Activated T-helper 1 cell treated with anti-CD3 and anti-CD28 coated beads, Interleukin-12 subunit alpha, Interleukin-12 subunit beta, Interleukin-2, Interleukin-4 antibody, amounts not matched to agents 30 ng/mL and 10 ng/mL and 1 ng/mL, durations not matched to agents 14 hours and 24 hours and 36 hours (primary cell): ENCODE measurements at regions of chr15 and their contacts with region 1.

Region 1: DNA sequence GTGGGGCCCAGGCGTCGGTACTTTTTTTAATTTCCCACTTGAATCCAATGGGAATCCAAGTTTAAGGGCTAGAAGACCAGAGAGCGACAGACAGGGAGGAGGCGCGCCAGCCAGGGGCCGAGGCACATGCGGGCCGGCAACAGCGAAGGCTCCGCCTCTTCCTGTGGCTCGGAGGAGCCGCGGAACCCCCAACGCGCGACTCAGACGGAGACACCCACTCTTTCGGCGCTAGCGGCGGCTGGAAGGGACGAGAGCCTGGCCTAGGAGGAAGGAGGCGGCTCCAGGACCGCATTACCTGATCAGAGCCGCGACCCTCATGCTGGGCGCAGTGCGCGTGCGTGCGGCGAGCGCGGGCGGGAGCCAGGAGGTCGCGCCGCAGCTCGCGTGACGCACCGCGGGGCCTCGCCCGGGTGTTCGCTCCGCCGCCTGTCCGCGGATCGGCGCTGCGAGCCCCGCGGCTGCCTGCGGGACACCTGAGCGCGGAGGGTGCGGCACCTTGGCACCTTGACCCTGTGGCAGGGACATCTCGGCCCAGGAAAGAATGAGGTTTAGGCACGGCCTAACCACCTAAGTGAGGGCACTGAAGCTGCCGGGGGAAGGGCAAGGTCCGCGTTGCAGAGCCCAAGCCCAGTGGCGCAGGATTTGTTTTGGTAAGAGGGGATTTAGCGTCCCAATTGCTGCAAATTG is at the start of gene DPH6:
- DNase-seq: peak; percentile 73
- H3K4me3 Mint-ChIP-seq: peak within 1 kb of the TSS; percentile 92
- H3K27ac Mint-ChIP-seq: peak within 1 kb of the TSS; percentile 98
- H3K4me1 Mint-ChIP-seq: peaks cover 10% of the 10 kb centered on the region
- H3K27me3 Mint-ChIP-seq: peaks cover 1% of the 10 kb centered on the region
- total RNA-seq, gene DPH6: 10.7 and 13.1 TPM in 2 replicates

Region 2: DNA sequence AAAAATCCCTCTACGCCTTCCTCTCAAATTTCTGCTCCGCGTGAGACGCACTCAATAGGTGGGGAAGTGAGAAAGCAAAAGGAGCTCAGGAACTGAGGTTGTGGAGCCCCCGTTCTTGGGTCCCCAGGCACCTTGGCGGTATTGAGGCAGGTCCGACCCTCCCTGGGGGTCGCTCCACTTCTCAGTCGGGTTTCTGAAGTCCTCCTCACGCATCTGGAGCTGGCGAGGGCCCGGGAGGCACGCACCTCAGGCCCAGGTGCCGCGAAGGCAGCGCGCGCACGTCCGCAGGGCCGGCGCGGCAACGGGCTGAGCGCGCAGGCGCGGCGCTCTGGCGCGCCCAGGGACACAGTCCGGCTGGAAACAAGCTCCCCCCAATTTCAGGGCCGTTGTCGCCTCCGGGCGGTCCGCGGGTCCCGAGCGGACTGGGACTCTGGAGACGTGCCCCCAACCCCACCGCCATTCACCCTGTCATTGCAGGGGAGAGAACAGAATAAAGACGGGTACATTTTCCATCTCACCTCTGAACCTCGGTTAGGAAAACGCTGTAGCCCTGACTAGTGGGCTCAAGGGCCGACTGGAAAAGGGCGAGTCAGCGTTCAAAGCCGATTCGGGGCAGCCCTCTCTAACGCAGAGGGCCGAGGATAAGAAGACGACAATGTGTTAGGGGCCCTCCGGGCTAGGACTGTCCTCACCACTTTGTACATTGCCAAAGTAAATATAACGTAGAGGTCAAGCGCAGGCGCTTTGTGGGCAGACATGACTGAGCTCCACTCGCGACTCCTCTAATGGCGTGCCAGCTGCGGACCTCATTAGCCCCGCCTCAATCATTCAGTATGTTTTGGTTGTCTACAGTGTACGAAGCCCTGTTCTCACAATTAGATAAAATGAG is 557.7 kb before region 1 on chr15 and contains the start of gene ZNF770:
- intact Hi-C with region 1: loop called (anchors 5 kb)
- DNase-seq: peak; percentile 84
- H3K4me3 Mint-ChIP-seq: peak within 1 kb of the TSS; percentile 97
- H3K27ac Mint-ChIP-seq: peak within 1 kb of the TSS; percentile 96
- H3K4me1 Mint-ChIP-seq: peaks cover 44% of the 10 kb centered on the region
- H3K27me3 Mint-ChIP-seq: no peaks in the 10 kb centered on the region
- total RNA-seq, gene ZNF770: 50.1 and 50.6 TPM in 2 replicates

Region 3: GRCh38 chr15:35657679-35658311 is 111.8 kb after region 1 on chr15:
- intact Hi-C with region 1: loop called (anchors 1 kb)
- DNase-seq: no peak
- H3K4me3 Mint-ChIP-seq: no peak overlapping the region
- H3K27ac Mint-ChIP-seq: peak overlapping the region; percentile 22
- H3K4me1 Mint-ChIP-seq: peaks cover 12% of the 10 kb centered on the region
- H3K27me3 Mint-ChIP-seq: peaks cover 4% of the 10 kb centered on the region

Region 4: GRCh38 chr15:35674873-35675781 is 129.2 kb after region 1 on chr15:
- intact Hi-C with region 1: loop called (anchors 5 kb)
- DNase-seq: no peak
- H3K4me3 Mint-ChIP-seq: no peak overlapping the region
- H3K27ac Mint-ChIP-seq: no peak overlapping the region
- H3K4me1 Mint-ChIP-seq: peaks cover 13% of the 10 kb centered on the region
- H3K27me3 Mint-ChIP-seq: peaks cover 3% of the 10 kb centered on the region

Region 5: GRCh38 chr15:36579792-36580431 is 1033.9 kb after region 1 on chr15:
- intact Hi-C with region 1: loop called (anchors 2 kb)
- DNase-seq: no peak
- H3K4me3 Mint-ChIP-seq: peak overlapping the region; percentile 87
- H3K27ac Mint-ChIP-seq: peak overlapping the region; percentile 89
- H3K4me1 Mint-ChIP-seq: peaks cover 35% of the 10 kb centered on the region
- H3K27me3 Mint-ChIP-seq: peaks cover 5% of the 10 kb centered on the region